ENCODE measurements at regions of chr11 and their contacts with region 1.

Region 1: DNA sequence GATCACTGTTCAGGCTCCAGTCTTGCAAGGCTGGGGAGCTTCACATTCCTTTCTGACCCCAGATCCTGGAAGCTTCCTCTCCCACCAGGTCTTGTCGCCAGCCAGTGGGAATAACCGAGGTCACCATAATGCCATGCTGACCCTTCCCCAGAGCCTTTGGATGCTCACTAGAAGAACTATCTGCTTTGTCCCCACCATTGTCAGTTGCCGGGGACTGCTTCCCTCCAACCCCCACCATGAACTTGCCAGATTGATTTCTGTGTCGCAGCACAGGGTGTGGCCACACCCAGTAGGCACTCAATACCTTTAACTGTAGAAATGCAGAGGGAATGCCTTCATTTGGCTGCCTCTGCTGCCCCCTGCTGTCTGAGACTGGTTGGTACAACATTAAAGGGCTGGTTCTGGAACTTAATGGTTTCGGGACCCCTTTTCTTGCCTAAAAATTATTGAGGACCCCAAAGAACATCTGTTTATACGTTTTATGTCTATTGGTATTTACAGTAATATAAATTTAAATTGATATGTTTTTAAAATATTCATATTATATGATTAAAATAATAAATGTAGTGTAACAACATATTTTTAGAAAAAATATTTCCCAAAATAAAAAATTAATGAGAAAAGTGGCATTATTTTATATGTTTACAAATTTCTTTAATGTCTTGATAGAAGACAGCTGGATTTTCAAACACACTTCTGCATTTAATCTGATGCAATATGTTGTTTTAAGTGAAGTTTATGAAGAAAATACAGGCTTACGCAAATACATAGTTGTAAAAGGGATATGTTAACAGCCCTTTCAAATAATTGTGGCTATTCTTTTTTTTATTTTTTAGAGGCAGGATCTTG is 6.7 kb upstream of the GDPD5 start:
- DNase-seq: peak; percentile 71 to 82
- ATAC-seq: peak; percentile 58 to 74; a peak in 4 of 6 replicates
- H3K4me3 ChIP-seq: no peak overlapping the region
- H3K27ac ChIP-seq: peak overlapping the region; percentile 17 to 18; a peak in 2 of 6 replicates
- H3K4me1 ChIP-seq: peaks cover 30% of the 10 kb centered on the region
- CTCF ChIP-seq: peak; percentile 96
- EP300 ChIP-seq: no peak
- POLR2A ChIP-seq: no peak
- RAD21 ChIP-seq: peak; percentile 98 to 99

Region 2: GRCh38 chr11:75399344-75400145 is 132.9 kb before region 1 on chr11 and contains the start of gene RPS3:
- CTCF ChIA-PET with region 1: interaction called, 10 read pairs
- POLR2A ChIA-PET with region 1: no interaction called
- DNase-seq: peak; percentile 88 to 93
- ATAC-seq: peak; percentile 94 to 96
- H3K4me3 ChIP-seq: peak within 1 kb of the TSS; percentile 77
- H3K27ac ChIP-seq: peak within 1 kb of the TSS; percentile 90 to 93
- H3K4me1 ChIP-seq: peaks cover 34% of the 10 kb centered on the region
- CTCF ChIP-seq: peak; percentile 28; the same call in 1 of the 3 replicates
- EP300 ChIP-seq: no peak
- POLR2A ChIP-seq: peak; percentile 97
- RAD21 ChIP-seq: no peak
- polyA plus RNA-seq, gene RPS3: 2,571 and 3,468 TPM in 2 replicates

Region 3: DNA sequence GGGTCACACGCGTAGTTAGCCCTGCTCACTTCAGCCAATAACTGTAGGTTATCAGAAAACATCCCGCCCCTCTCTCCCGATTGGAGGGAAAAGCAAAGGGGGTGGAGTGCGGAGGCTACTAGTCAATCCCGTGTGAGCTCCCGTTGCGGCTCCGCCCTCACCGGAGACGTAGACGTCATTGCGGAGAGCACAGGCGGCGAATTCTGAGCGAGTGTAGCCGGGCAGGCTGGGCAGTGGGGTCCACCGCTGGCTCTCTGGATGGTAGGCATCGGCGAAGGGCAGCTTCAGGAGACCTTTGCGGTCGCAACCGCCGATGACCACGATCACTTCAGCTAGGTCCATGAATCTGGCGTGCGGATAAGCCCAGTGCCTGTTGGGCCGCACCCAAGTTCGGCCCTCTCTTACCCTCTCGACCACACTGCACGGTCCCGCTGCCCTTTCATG is 104.1 kb before region 1 on chr11:
- CTCF ChIA-PET with region 1: interaction called, 15 read pairs
- POLR2A ChIA-PET with region 1: no interaction called
- DNase-seq: no peak
- ATAC-seq: no peak
- H3K4me3 ChIP-seq: no peak overlapping the region
- H3K27ac ChIP-seq: no peak overlapping the region
- H3K4me1 ChIP-seq: peaks cover 16% of the 10 kb centered on the region
- CTCF ChIP-seq: no peak
- EP300 ChIP-seq: no peak
- POLR2A ChIP-seq: no peak
- RAD21 ChIP-seq: no peak

Region 4: DNA sequence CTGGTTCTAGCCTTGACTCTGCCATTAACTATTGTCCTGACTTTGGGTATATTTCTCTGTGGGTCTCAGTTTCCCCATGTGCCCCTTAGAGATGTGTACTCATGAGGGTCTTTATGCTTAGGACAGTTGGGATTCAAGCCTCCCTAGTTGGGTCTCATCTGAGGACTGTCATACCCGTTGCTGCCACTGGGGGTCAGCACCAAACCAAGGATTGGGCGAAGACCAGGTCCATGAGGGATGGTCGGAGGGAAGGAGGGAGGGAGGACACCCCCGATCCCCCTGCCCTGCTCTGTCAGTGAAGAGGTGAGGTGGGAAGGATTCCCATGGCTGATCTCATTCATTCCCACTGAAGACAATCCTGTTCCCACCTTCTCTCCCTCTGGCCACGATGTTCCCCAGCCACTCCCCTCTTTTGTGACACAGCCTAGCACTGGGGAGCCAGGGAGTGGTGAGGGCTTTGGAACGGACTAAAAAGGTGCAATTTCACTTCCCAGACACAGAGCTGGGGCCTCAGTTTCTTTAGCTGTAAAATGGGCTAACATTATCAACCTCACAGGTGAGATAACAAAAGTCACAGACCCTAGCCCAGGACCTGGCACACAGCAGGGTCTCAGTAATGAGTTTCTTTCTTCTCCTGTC is 87.0 kb before region 1 on chr11:
- CTCF ChIA-PET with region 1: interaction called, 432 read pairs
- POLR2A ChIA-PET with region 1: no interaction called
- DNase-seq: peak; percentile 52 to 83
- ATAC-seq: peak; percentile 68 to 89
- H3K4me3 ChIP-seq: no peak overlapping the region
- H3K27ac ChIP-seq: no peak overlapping the region
- H3K4me1 ChIP-seq: no peaks in the 10 kb centered on the region
- CTCF ChIP-seq: peak; percentile 94
- EP300 ChIP-seq: no peak
- POLR2A ChIP-seq: no peak
- RAD21 ChIP-seq: peak; percentile 99

Region 5: DNA sequence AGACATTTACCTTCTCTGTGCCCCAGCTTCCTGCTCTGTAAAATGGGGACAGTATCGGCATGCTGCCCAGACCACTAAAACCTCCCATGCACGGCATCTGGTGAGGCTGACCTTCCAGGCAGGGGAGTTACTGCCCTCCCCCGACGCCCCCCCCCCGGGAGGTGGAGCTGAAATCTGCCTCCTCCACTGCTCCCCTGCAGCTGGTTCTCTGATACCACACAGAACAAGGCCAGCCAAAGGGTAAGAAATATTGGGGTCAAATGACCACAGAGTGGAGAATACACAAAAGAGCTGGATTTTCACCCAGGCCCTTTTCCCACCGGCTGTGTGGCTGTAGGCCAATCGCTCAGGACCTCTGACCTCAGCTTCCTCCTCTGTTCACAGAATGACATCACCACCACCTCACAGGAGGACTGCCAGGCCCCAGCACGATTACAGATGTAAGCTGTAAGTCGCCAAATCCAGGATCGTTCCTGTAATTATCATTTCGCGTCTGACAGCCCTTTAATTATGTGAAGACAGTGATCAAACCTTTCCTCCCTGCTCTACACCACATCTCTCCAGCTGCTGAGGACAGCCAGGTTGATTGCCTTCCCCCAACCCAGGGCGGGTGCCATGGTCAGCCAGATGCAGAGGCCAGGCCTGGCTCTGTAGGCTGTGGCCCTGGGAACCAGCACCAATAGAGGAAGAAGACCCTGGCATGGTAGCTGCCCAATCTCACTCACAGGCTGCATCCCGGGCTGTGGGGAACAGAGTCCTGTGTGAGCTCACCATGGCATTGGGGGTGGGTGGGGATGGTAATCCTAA is 63.7 kb before region 1 on chr11:
- CTCF ChIA-PET with region 1: interaction called, 10 read pairs
- POLR2A ChIA-PET with region 1: no interaction called
- DNase-seq: no peak
- ATAC-seq: no peak
- H3K4me3 ChIP-seq: no peak overlapping the region
- H3K27ac ChIP-seq: no peak overlapping the region
- H3K4me1 ChIP-seq: no peaks in the 10 kb centered on the region
- CTCF ChIP-seq: no peak
- EP300 ChIP-seq: no peak
- POLR2A ChIP-seq: no peak
- RAD21 ChIP-seq: no peak

Region 6: DNA sequence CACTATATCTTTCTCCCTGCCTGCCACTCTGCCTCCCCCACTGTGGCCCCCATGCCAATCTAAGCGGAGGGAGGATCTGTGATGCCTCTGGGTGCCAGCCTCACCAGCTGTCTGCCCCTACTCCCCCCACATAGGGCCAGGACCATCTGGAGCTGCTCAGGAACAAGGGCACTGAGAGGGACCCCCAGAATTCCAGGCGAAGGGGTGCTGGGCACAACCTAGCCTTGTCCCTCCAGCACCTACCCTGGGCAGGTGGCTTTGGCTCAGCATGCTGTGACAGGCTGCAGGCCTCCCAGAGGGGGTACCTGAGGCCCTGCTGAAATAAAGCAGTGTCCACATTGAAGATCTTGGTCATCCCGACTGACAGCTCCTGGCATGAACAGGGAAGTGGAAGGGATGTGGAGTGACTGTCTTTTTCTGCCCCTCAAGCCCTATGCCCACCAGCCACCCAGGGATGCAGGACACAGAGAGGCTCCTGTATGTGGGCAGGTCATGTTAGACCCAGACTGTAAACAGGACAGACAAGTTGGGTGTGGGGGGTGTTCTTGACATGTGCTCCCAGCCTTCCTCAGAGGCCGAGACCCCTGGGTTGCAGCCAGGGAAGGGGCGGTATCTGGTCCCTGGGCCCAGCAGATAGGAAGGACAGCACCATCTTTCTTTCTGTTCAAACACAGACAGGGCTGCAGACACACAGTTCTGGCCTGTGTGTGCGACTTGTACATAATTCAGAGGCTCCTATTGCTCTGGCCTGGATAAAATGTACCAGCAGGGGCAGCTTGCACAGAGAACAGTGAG is 23.6 kb before region 1 on chr11:
- CTCF ChIA-PET with region 1: interaction called, 14 read pairs
- POLR2A ChIA-PET with region 1: no interaction called
- DNase-seq: no peak
- ATAC-seq: peak in 1 of 2 experiments; percentile 60; a peak in 3 of 6 replicates
- H3K4me3 ChIP-seq: no peak overlapping the region
- H3K27ac ChIP-seq: no peak overlapping the region
- H3K4me1 ChIP-seq: peaks cover 35% of the 10 kb centered on the region
- CTCF ChIP-seq: no peak
- EP300 ChIP-seq: no peak
- POLR2A ChIP-seq: no peak
- RAD21 ChIP-seq: no peak

Region 7: DNA sequence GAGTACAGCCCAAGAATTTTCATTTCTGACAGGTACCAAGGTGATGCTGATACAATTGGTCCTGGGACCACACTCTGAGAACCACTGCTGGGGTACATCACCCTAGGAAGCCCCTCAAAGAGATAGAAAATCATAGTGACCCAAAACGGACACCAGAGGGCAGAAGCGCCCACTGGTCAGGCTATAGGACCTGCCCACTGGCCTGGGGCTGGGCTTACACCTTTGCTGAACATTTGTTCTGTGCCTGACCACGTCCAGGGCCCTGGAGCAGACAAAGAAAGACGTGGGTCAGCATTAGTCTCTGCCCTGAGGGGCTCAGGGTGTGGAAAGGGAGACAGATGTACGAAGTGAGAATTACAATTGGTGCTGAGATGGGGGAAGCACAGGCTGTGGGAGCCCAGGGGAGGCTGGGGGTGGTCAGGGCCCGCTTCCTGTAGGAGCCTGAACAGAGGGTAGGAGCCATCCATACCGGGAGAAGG is 15.2 kb after region 1 on chr11:
- CTCF ChIA-PET with region 1: interaction called, 15 read pairs
- POLR2A ChIA-PET with region 1: no interaction called
- DNase-seq: peak; percentile 53 to 89
- ATAC-seq: peak; percentile 87 to 96
- H3K4me3 ChIP-seq: no peak overlapping the region
- H3K27ac ChIP-seq: peak overlapping the region in 1 of 2 experiments; percentile 43; a peak in 1 of 6 replicates
- H3K4me1 ChIP-seq: no peaks in the 10 kb centered on the region; the same call in 2 of the 3 replicates
- CTCF ChIP-seq: peak; percentile 89
- EP300 ChIP-seq: no peak
- POLR2A ChIP-seq: no peak
- RAD21 ChIP-seq: peak; percentile 88 to 89

Region 8: GRCh38 chr11:76013526-76013925 is 481.1 kb after region 1 on chr11:
- CTCF ChIA-PET with region 1: no interaction called
- POLR2A ChIA-PET with region 1: no interaction called
- DNase-seq: no peak
- ATAC-seq: no peak
- H3K4me3 ChIP-seq: no peak overlapping the region
- H3K27ac ChIP-seq: no peak overlapping the region
- H3K4me1 ChIP-seq: no peaks in the 10 kb centered on the region
- CTCF ChIP-seq: no peak
- EP300 ChIP-seq: no peak
- POLR2A ChIP-seq: no peak
- RAD21 ChIP-seq: no peak